BJ (cell line): ENCODE measurements at regions of chr7 and their contacts with region 1.

Region 1: DNA sequence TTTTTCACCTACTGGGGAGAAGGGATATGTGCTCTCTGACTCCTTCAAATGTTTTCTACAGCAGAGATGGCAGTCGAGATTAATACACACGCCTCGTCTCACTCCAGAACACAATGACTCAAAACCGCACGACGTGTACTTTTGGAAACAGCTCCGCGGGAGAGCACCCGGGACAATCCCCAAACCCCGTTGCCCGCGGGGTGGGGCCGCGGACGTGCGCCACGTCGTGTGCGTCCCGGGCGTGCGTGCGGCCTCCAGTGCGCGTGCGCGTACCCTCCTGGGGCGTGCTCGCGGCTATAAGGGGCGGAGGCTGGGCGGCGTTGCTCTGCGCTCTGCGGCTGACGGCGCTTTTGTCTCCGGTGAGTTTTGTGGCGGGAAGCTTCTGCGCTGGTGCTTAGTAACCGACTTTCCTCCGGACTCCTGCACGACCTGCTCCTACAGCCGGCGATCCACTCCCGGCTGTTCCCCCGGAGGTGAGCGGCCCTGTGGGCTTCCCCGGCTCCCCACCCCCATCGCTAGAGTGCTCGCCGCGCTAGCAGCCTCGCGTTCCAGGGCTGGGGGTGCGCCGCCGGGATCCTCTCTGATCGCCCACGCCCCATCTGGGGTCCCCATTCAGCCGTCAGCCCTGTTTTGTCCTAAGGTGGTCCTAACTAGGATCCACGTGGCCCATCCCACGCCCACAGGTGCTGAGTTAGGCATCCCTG is at the start of gene HILPDA:
- DNase-seq: peak; percentile 76
- H3K4me3 ChIP-seq: peak within 1 kb of the TSS; percentile 88
- H3K27me3 ChIP-seq: no peaks in the 10 kb centered on the region
- CTCF ChIP-seq: 0 out of 2 replicates have a peak, but pooled peaks have one; percentile 11
- polyA plus RNA-seq, gene HILPDA: 16.0 and 21.5 TPM in 2 replicates

Region 2: GRCh38 chr7:128398016-128398840 is 57.5 kb before region 1 on chr7:
- CTCF ChIA-PET with region 1: interaction called, 27 read pairs
- POLR2A ChIA-PET with region 1: no interaction called
- DNase-seq: no peak
- H3K4me3 ChIP-seq: no peak overlapping the region
- H3K27me3 ChIP-seq: no peaks in the 10 kb centered on the region
- CTCF ChIP-seq: peak; percentile 94

Region 3: DNA sequence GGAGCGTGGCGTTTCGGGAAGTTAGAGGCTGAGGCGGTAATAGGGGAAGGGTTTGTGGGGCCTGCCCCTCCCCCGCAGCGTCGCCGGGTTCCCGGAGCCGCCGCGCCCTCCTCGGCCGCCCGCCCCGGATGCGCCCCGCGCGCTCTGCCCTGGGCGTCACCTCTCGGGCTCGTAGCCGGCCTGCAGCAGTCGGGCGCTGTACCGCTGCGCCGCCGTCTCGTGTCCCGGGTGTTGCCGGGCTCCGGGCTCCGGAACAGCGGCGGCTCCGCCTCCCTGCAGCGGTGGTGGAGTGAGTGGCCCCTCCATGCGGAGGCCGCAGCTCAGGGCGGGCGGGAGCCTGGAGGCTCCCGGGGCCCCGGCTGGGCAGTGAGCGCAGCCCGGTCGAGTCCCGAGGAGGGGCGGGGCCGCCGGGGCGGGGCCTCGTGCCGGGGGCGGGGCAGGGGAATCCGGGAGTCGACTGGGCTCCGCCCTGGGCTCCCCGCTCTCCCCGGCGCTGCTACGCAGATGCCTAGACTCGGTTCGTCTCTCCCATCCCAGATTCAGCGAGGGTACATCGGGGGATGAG is 46.0 kb before region 1 on chr7 and contains the start of gene IMPDH1:
- CTCF ChIA-PET with region 1: interaction called, 15 read pairs
- POLR2A ChIA-PET with region 1: interaction called, 5 read pairs
- DNase-seq: peak; percentile 34
- H3K4me3 ChIP-seq: peak within 1 kb of the TSS; percentile 60
- H3K27me3 ChIP-seq: peaks cover 2% of the 10 kb centered on the region
- CTCF ChIP-seq: no peak
- polyA plus RNA-seq, gene IMPDH1: 65.7 and 84.5 TPM in 2 replicates

Region 4: DNA sequence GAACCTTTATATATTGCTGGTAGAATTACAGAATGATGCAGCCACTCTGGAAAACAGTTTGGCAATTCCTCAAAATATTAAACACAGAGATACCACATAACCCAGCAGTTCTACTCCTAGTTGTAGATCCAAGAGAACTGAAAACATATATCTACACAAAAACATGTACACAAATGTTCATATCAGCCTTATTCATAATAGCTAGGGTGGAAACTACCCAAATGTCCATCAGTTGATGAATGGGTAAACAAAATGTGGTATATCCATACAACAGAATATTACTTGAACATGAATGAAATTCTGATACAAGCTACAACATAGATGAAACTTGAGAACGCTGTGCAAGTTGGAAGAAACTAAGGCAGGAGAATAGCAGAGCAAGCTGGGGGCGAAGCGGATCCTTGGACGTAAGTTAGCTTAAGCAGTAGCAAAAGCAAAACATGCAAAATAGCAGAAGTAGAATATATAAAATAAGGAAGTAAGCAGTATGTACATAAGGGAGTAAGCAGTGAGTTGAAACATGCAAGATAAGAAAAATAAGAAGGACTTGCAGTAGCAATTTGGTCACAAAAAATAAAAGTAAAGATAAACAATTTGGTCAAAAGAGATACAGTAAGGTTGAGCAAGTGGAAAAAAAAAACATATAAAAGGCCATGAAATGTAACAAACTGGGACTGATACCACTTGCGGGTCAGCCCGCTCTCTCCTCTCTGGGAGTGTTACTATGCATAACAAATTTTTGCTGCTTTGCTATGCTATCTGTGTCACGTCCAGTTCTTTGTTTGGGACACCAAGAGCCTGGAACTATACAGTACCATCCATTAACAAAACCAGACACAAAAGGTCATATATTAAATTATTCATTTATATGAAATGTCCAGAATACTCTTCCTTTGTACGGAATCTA is 18.0 kb before region 1 on chr7:
- CTCF ChIA-PET with region 1: interaction called, 73 read pairs
- POLR2A ChIA-PET with region 1: no interaction called
- DNase-seq: no peak
- H3K4me3 ChIP-seq: no peak overlapping the region
- H3K27me3 ChIP-seq: peaks cover 2% of the 10 kb centered on the region
- CTCF ChIP-seq: no peak

Region 5: DNA sequence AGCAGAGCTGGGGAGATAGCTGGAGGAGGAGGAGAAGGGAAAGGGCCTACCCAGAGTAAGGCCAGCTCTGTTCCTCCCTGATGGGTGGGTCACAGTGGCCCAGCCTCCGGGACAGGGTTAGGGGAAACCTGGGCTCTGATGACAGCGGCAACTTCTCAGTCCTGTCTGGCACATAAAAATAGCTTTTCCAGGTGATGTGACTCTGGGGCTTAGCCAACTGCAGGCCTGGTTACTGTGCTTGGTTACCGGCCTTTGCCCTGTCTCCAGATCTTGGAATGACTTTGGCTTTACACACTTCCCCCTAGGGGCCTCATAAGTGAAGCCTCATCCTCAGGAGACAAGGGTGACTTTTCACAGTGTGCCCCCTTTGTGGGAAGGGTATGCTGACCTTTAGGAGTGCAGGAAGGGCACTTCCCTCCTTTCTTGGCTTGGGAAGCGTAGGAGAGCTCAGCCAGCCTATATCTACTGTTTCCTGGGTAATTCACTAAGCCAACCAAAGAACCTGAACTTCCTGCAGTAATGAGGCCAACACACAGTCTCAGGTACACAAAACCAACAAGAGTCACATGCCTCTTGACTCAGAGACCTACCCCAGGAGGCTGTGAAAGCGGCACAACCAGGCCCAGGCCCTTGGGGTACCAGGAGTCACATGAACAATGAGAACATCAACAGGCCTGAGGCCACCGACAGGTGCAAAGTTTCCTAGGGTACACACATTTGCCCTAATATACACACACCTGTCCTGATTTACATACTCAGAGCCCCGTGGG is 11.7 kb before region 1 on chr7:
- CTCF ChIA-PET with region 1: interaction called, 7 read pairs
- POLR2A ChIA-PET with region 1: interaction called, 11 read pairs
- DNase-seq: no peak
- H3K4me3 ChIP-seq: no peak overlapping the region
- H3K27me3 ChIP-seq: no peaks in the 10 kb centered on the region; the same call in 1 of the 2 replicates
- CTCF ChIP-seq: no peak